AG04450 (cell line): ENCODE measurements at regions of chr3 and their contacts with region 1.

Region 1: GRCh38 chr3:185942907-185943759 is 5.3 kb upstream of the TRA2B start:
- DNase-seq: peak; percentile 49
- H3K4me3 ChIP-seq: no peak overlapping the region
- H3K27ac ChIP-seq: no peak overlapping the region
- H3K27me3 ChIP-seq: peaks cover 5% of the 10 kb centered on the region
- CTCF ChIP-seq: peak; percentile 99

Region 2: DNA sequence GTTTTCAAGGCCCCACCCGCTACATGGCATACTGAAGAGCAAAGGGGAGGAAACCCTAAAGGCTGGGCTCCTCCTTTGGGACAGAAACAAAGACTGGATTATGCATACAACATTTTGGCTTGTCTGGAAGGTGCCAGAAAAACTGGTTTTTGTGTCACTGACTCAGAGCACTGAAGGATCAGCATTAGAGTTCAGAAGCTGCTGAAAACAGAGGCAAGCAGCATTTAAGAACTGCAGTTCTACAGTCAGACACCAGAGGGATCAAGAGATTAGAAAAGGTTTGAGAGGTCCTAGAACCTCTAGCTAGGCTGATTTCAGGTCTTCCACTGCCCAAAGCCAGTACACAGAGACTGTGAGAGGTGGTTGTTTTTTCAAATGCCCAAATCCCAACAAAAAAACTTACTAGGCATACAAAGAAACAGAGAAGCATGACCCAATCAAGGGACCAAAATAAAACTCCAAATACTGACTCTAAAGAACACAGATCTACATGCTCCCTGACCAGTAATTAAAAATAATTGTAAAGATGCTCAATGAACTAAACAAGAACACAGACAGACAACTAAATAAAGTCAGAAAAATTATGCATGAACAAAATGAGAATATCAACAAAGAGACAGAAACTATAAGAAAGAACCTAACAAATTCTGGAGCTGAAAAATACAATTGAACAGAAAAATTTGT is 265.8 kb before region 1 on chr3:
- CTCF ChIA-PET with region 1: interaction called, 14 read pairs
- POLR2A ChIA-PET with region 1: interaction called, 5 read pairs
- DNase-seq: peak; percentile 56
- H3K4me3 ChIP-seq: no peak overlapping the region
- H3K27ac ChIP-seq: no peak overlapping the region
- H3K27me3 ChIP-seq: no peaks in the 10 kb centered on the region
- CTCF ChIP-seq: peak; percentile 84

Region 3: GRCh38 chr3:185929192-185930151 is 13.7 kb before region 1 on chr3:
- CTCF ChIA-PET with region 1: interaction called, 42 read pairs
- POLR2A ChIA-PET with region 1: interaction called, 26 read pairs
- DNase-seq: no peak
- H3K4me3 ChIP-seq: peak overlapping the region; percentile 3
- H3K27ac ChIP-seq: no peak overlapping the region
- H3K27me3 ChIP-seq: no peaks in the 10 kb centered on the region
- CTCF ChIP-seq: no peak

Region 4: GRCh38 chr3:185968168-185968567 is 25.0 kb after region 1 on chr3:
- CTCF ChIA-PET with region 1: interaction called, 25 read pairs
- POLR2A ChIA-PET with region 1: no interaction called
- DNase-seq: no peak
- H3K4me3 ChIP-seq: no peak overlapping the region
- H3K27ac ChIP-seq: no peak overlapping the region
- H3K27me3 ChIP-seq: peaks cover 5% of the 10 kb centered on the region
- CTCF ChIP-seq: no peak

Region 5: GRCh38 chr3:185983495-185984141 is 40.5 kb after region 1 on chr3:
- CTCF ChIA-PET with region 1: interaction called, 29 read pairs
- POLR2A ChIA-PET with region 1: no interaction called
- DNase-seq: peak; percentile 45
- H3K4me3 ChIP-seq: no peak overlapping the region
- H3K27ac ChIP-seq: no peak overlapping the region
- H3K27me3 ChIP-seq: no peaks in the 10 kb centered on the region
- CTCF ChIP-seq: peak; percentile 92

Region 6: DNA sequence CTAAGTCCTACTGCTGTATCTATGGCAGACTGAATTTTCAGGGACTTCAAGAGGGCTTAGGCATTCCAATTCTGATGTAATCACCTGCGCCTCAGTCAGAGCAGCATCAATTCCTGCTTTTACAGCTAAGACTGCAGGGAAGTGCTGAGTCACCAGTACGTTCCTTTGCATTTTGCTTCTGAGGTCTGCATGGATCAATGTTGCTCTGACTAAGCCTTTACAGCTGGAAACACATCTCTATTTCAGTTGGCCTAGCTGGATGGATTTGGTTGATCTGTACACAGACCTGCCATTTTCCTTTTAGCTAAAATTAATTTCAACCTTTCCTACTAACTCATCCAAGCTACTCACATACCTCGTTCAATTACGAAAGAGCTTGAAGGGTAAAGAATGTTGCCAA is 114.5 kb after region 1 on chr3:
- CTCF ChIA-PET with region 1: interaction called, 10 read pairs
- POLR2A ChIA-PET with region 1: no interaction called
- DNase-seq: peak; percentile 90
- H3K4me3 ChIP-seq: no peak overlapping the region
- H3K27ac ChIP-seq: peak overlapping the region; percentile 84
- H3K27me3 ChIP-seq: no peaks in the 10 kb centered on the region
- CTCF ChIP-seq: no peak

Region 7: GRCh38 chr3:186307594-186308221 is 364.6 kb after region 1 on chr3:
- CTCF ChIA-PET with region 1: interaction called, 13 read pairs
- POLR2A ChIA-PET with region 1: no interaction called
- DNase-seq: peak; percentile 18
- H3K4me3 ChIP-seq: no peak overlapping the region
- H3K27ac ChIP-seq: no peak overlapping the region
- H3K27me3 ChIP-seq: peaks cover 12% of the 10 kb centered on the region
- CTCF ChIP-seq: no peak

Region 8: DNA sequence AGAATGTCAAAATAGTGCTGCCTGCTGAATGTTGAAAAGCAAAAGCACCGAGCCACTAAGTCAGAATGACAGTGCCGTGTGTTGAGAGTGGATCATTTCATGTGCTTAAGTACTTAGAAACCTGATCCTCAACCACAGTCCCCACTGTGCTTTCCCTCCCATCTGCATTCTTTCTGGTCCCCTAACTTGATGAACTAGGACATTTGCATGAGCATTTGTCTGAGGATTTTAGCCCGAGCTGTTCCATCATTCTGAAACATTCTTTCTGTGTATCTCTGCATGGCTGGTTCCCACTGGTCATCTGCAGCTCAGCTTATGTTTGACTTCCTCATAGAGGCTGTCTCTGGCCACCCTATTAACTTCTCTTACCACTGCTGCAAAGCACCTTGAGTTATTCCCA is 1685.0 kb after region 1 on chr3:
- CTCF ChIA-PET with region 1: no interaction called
- POLR2A ChIA-PET with region 1: no interaction called
- DNase-seq: no peak
- H3K4me3 ChIP-seq: no peak overlapping the region
- H3K27ac ChIP-seq: no peak overlapping the region
- H3K27me3 ChIP-seq: peaks cover 4% of the 10 kb centered on the region
- CTCF ChIP-seq: no peak